IMR-90 (cell line): ENCODE measurements at regions of chr12 and their contacts with region 1.

Region 1: GRCh38 chr12:116222358-116222757 is 55.1 kb downstream of the MED13L start:
- DNase-seq: peak; percentile 94
- ATAC-seq: peak; percentile 59
- H3K4me3 ChIP-seq: no peak overlapping the region
- H3K27ac ChIP-seq: no peak overlapping the region
- H3K4me1 ChIP-seq: no peaks in the 10 kb centered on the region
- H3K27me3 ChIP-seq: no peaks in the 10 kb centered on the region
- CTCF ChIP-seq: no peak
- POLR2A ChIP-seq: no peak
- RAD21 ChIP-seq: no peak

Region 2: GRCh38 chr12:116164250-116165035 is 57.9 kb before region 1 on chr12:
- CTCF ChIA-PET with region 1: no interaction called
- POLR2A ChIA-PET with region 1: no interaction called
- dilution Hi-C with region 1: no loop called
- in situ Hi-C with region 1: no loop called
- intact Hi-C with region 1: loop called (anchors 5 kb)
- DNase-seq: peak; percentile 11
- ATAC-seq: peak; percentile 15; the same call in 1 of the 2 replicates
- H3K4me3 ChIP-seq: no peak overlapping the region
- H3K27ac ChIP-seq: no peak overlapping the region
- H3K4me1 ChIP-seq: peaks cover 15% of the 10 kb centered on the region
- H3K27me3 ChIP-seq: no peaks in the 10 kb centered on the region
- CTCF ChIP-seq: no peak
- POLR2A ChIP-seq: no peak
- RAD21 ChIP-seq: no peak

Region 3: GRCh38 chr12:116406516-116406915 is 184.2 kb after region 1 on chr12:
- CTCF ChIA-PET with region 1: no interaction called
- POLR2A ChIA-PET with region 1: no interaction called
- dilution Hi-C with region 1: no loop called
- in situ Hi-C with region 1: no loop called
- intact Hi-C with region 1: no loop called
- DNase-seq: peak; percentile 55
- ATAC-seq: peak; percentile 61
- H3K4me3 ChIP-seq: no peak overlapping the region
- H3K27ac ChIP-seq: no peak overlapping the region
- H3K4me1 ChIP-seq: peaks cover 8% of the 10 kb centered on the region
- H3K27me3 ChIP-seq: no peaks in the 10 kb centered on the region
- CTCF ChIP-seq: no peak
- POLR2A ChIP-seq: no peak
- RAD21 ChIP-seq: no peak